ENCODE measurements at regions of chr22 and their contacts with region 1.

Region 1: DNA sequence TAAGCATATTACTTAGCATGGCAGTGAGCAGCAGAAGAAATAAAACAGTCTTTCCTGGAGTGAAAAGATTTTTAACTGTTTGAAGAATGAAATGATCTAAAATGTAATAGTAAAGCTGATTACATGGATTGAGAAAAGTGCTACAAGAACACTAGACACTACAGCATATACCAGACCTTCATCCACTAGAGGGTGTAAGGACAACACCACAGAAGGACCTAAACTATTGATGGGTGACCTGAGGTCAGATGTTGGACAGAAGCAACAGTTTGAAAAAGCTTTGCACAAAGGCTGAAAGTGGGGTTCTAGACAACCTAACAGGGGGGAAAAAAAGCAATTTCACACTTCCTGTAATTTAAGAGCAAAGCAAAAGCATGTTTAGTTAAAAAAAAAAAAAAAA is 97.7 kb downstream of the RBFOX2 start:
- DNase-seq: peak; percentile 77
- H3K4me3 ChIP-seq: no peak overlapping the region
- H3K27ac ChIP-seq: no peak overlapping the region
- H3K4me1 ChIP-seq: no peaks in the 10 kb centered on the region
- H3K27me3 ChIP-seq: no peaks in the 10 kb centered on the region
- CTCF ChIP-seq: peak; percentile 40 to 60
- POLR2A ChIP-seq: no peak

Region 2: GRCh38 chr22:35684270-35684700 is 246.6 kb before region 1 on chr22:
- CTCF ChIA-PET with region 1: interaction called, 11 read pairs
- POLR2A ChIA-PET with region 1: no interaction called
- dilution Hi-C with region 1: no loop called
- intact Hi-C with region 1: no loop called
- DNase-seq: peak; percentile 34
- H3K4me3 ChIP-seq: no peak overlapping the region
- H3K27ac ChIP-seq: no peak overlapping the region
- H3K4me1 ChIP-seq: no peaks in the 10 kb centered on the region
- H3K27me3 ChIP-seq: peaks cover 2 to 7% of the 10 kb centered on the region in 2 experiments
- CTCF ChIP-seq: peak; percentile 14 to 32
- POLR2A ChIP-seq: no peak

Region 3: DNA sequence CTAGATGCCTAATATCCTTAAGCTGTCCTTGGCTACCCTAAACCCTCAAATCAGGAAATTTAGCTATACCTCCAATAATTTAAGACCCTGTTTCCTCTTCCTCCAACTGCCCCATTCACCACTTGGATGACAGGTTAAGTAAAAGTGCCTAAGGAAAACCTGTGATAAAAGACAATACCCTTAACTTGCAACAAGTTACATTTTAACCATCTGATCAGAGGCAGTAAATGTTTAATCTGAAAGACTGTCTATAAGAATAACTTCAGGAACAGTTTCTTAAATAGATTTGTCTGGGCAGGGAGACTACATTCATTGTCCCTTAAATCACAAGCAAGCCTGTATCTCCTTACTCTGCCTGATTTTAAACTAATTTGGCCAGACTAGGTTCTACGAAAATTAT is 84.1 kb before region 1 on chr22:
- CTCF ChIA-PET with region 1: no interaction called
- POLR2A ChIA-PET with region 1: no interaction called
- dilution Hi-C with region 1: no loop called
- intact Hi-C with region 1: no loop called
- DNase-seq: no peak
- H3K4me3 ChIP-seq: no peak overlapping the region
- H3K27ac ChIP-seq: no peak overlapping the region
- H3K4me1 ChIP-seq: peaks cover 3% of the 10 kb centered on the region
- H3K27me3 ChIP-seq: no peaks in the 10 kb centered on the region
- CTCF ChIP-seq: no peak
- POLR2A ChIP-seq: no peak

Region 4: DNA sequence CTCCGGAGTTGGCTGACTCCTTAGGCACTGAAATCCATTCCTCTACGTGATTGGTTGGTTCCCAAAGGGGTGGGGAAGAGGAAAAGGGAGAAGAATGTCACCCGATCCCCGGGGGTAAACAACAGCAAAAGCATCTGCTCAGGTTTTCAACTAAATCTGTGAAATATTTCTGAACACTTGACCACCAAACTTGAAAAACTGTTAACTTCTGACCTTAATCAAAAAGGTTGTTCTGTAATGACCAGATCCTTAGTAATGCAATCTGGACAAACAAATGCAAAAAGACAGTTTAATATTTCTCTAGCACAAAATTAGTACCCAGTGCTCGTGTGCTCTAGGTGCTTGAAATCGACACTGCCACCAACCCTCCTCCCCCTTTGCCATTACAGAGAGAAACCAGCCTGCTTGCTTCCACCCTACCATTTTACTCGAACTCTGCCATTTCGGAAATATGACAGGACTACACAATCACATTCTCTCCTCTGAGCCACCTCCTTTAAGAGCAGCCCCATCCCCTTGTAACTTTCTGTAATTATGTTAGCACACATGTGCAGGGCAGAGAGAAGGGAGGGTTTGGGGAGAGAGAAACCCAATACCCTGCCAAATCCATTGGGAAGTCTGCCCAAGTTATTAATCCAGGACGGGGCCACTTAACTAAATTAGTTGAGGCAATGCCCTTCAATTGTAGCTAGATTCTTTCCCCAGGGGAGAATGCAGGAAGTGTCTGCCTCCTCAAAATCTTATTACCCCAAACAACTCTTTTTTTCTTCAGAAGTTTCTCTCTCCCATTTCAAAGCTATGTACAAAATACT is 16.1 kb before region 1 on chr22:
- CTCF ChIA-PET with region 1: interaction called, 15 read pairs
- POLR2A ChIA-PET with region 1: no interaction called
- dilution Hi-C with region 1: no loop called
- intact Hi-C with region 1: no loop called
- DNase-seq: peak; percentile 88
- H3K4me3 ChIP-seq: peak overlapping the region; percentile 26 to 68 (median 28)
- H3K27ac ChIP-seq: peak overlapping the region; percentile 27
- H3K4me1 ChIP-seq: peaks cover 35% of the 10 kb centered on the region
- H3K27me3 ChIP-seq: no peaks in the 10 kb centered on the region
- CTCF ChIP-seq: no peak
- POLR2A ChIP-seq: peak; percentile 36

Region 5: DNA sequence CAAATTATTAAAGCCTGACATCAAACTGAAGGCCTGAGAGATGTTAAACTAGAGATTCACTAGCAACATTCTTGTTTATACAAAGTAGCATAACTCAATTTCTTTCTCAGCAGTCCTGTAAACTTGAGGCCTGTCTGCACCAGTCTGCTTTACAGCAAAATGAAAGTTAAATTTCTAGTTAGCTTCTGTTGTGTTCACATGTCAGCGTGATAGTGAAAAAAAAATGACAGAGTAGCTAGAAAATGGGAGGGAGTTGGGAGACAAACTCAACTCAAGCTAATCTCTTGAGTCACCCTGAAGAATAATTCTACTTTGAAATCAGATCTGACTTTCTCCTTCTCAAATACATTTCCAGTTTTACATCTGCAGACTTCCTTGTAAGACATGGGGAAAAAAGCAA is 91.2 kb after region 1 on chr22:
- CTCF ChIA-PET with region 1: interaction called, 30 read pairs
- POLR2A ChIA-PET with region 1: no interaction called
- dilution Hi-C with region 1: no loop called
- intact Hi-C with region 1: no loop called
- DNase-seq: no peak
- H3K4me3 ChIP-seq: no peak overlapping the region
- H3K27ac ChIP-seq: no peak overlapping the region
- H3K4me1 ChIP-seq: peaks cover 10% of the 10 kb centered on the region
- H3K27me3 ChIP-seq: no peaks in the 10 kb centered on the region
- CTCF ChIP-seq: no peak
- POLR2A ChIP-seq: no peak

Region 6: DNA sequence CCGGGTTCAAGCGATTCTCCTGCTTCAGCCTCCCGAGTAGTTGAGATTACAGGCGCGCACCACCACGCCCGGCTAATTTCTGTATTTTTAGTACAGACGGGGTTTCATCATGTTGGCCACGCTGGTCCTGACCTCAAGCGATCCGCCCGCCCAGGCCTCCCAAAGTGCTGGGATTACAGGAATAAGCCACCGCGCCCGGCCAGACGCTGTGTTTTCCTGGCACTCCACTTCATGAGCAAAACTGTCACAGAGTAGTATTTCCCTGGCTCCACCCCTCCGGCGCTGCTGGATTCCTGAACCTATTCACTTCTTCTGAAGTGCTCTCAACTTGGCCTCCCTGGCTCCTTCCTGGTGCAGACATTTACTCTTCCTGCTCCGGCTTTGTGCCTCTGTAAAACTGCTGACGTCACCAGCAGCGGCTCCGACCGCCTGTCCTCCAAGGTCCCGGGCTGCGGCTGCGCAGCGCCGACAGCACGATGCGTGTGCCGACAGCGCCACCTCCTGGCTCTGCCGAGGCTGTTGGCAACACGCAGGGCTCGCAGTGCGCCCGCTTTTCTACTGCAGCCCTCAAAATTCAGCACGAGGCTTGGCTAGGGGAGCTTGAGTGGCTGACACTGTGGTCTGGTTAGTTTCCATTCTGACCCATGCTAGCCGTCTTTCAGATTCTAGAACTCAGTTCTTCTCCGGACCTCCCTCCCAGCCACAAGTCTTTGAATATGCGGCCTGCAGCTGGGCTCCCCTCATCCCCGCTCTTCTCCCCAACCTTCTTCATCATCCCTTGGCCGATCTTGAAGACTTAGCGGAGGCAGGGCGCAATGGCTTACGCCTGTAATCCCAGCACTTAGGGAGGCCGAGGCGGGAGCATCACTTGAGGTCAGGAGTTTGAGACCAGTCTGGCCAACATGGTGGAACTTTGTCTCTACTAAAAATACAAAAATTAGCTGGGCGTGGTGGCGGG is 193.0 kb after region 1 on chr22:
- CTCF ChIA-PET with region 1: interaction called, 30 read pairs
- POLR2A ChIA-PET with region 1: no interaction called
- dilution Hi-C with region 1: no loop called
- intact Hi-C with region 1: loop called (anchors 1 kb)
- DNase-seq: peak; percentile 96
- H3K4me3 ChIP-seq: no peak overlapping the region
- H3K27ac ChIP-seq: peak overlapping the region; percentile 18
- H3K4me1 ChIP-seq: no peaks in the 10 kb centered on the region
- H3K27me3 ChIP-seq: no peaks in the 10 kb centered on the region
- CTCF ChIP-seq: peak; percentile 98 to 99
- POLR2A ChIP-seq: no peak

Measured in endothelial cell of umbilical vein (primary cell).